Naive thymus-derived CD4-positive, alpha-beta T cell (primary cell): ENCODE measurements at regions of chr14 and their contacts with region 1.

Region 1: GRCh38 chr14:67526676-67527459 is 6.2 kb upstream of the PLEKHH1 start:
- DNase-seq: peak in 5 of 9 donors; percentile 33 to 46 (median 35)
- ATAC-seq: peak; percentile 78
- H3K4me3 ChIP-seq: no peak overlapping the region
- H3K4me3 Mint-ChIP-seq: no peak overlapping the region
- H3K27ac ChIP-seq: no peak overlapping the region
- H3K27ac Mint-ChIP-seq: no peak overlapping the region
- H3K4me1 ChIP-seq: no peaks in the 10 kb centered on the region
- H3K4me1 Mint-ChIP-seq: peaks cover 0 to 6% (median 0%) of the 10 kb centered on the region in 7 donors
- H3K27me3 ChIP-seq: no peaks in the 10 kb centered on the region
- H3K27me3 Mint-ChIP-seq: peaks cover 30 to 75% (median 36%) of the 10 kb centered on the region in 5 donors

Region 2: DNA sequence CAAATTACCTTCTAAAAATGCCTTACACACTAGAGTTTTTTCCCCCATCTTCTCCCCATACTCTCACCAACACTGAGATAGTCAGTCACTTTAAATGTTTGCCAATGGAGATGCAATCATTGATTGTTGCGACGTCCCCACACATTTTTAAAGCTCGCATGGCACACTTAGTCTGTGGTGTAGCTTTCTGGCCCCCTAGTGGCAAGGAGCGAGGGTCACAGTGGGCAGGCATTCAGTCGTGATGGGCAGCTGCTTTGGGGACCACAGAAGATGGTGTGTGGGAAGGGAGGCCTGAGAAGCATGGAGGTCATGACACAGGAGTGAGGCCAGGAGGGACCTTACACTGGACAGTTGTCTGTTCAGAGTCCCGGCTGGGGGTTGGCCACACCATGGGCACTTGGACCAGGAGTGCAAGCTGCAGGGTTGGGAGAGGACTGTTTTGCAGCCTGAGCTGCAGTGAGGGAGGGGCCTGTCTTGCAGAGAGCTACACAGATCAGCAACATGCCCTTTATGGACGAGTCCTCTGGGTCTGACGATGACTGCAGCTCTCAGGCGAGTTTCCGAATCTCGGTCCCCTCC is 44.5 kb after region 1 on chr14:
- CTCF ChIA-PET with region 1: interaction called, 24 read pairs
- POLR2A ChIA-PET with region 1: no interaction called
- intact Hi-C with region 1: loop called (anchors 1 kb)
- DNase-seq: peak; percentile 44 to 76 (median 64)
- ATAC-seq: peak; percentile 87
- H3K4me3 ChIP-seq: no peak overlapping the region
- H3K4me3 Mint-ChIP-seq: no peak overlapping the region
- H3K27ac ChIP-seq: no peak overlapping the region
- H3K27ac Mint-ChIP-seq: peak overlapping the region in 1 of 9 donors; percentile 32
- H3K4me1 ChIP-seq: no peaks in the 10 kb centered on the region
- H3K4me1 Mint-ChIP-seq: peaks cover 0 to 18% (median 0%) of the 10 kb centered on the region in 7 donors
- H3K27me3 ChIP-seq: no peaks in the 10 kb centered on the region
- H3K27me3 Mint-ChIP-seq: peaks cover 0 to 13% (median 5%) of the 10 kb centered on the region in 5 donors

Region 3: GRCh38 chr14:68042608-68043210 is 515.8 kb after region 1 on chr14:
- CTCF ChIA-PET with region 1: no interaction called
- POLR2A ChIA-PET with region 1: no interaction called
- intact Hi-C with region 1: no loop called
- DNase-seq: no peak
- ATAC-seq: no peak
- H3K4me3 ChIP-seq: no peak overlapping the region
- H3K4me3 Mint-ChIP-seq: no peak overlapping the region
- H3K27ac ChIP-seq: no peak overlapping the region
- H3K27ac Mint-ChIP-seq: no peak overlapping the region
- H3K4me1 ChIP-seq: no peaks in the 10 kb centered on the region
- H3K4me1 Mint-ChIP-seq: peaks cover 0 to 7% (median 4%) of the 10 kb centered on the region in 7 donors
- H3K27me3 ChIP-seq: no peaks in the 10 kb centered on the region
- H3K27me3 Mint-ChIP-seq: peaks cover 0 to 3% (median 0%) of the 10 kb centered on the region in 5 donors